B cell (primary cell): ENCODE measurements at regions of chr12 and their contacts with region 1.

Region 1: GRCh38 chr12:111942557-111942956 is 70.4 kb downstream of the TMEM116 start:
- DNase-seq: no peak
- ATAC-seq: no peak
- H3K4me3 ChIP-seq: no peak overlapping the region
- H3K4me3 Mint-ChIP-seq: no peak overlapping the region
- H3K27ac ChIP-seq: no peak overlapping the region
- H3K27ac Mint-ChIP-seq: no peak overlapping the region
- H3K4me1 ChIP-seq: no peaks in the 10 kb centered on the region
- H3K4me1 Mint-ChIP-seq: no peaks in the 10 kb centered on the region
- H3K27me3 ChIP-seq: no peaks in the 10 kb centered on the region
- H3K27me3 Mint-ChIP-seq: no peaks in the 10 kb centered on the region
- CTCF ChIP-seq: no peak

Region 2: GRCh38 chr12:111975161-111975931 is 32.8 kb after region 1 on chr12:
- CTCF ChIA-PET with region 1: no interaction called
- POLR2A ChIA-PET with region 1: no interaction called
- intact Hi-C with region 1: no loop called
- DNase-seq: no peak
- ATAC-seq: no peak
- H3K4me3 ChIP-seq: no peak overlapping the region
- H3K4me3 Mint-ChIP-seq: no peak overlapping the region
- H3K27ac ChIP-seq: no peak overlapping the region
- H3K27ac Mint-ChIP-seq: no peak overlapping the region
- H3K4me1 ChIP-seq: no peaks in the 10 kb centered on the region
- H3K4me1 Mint-ChIP-seq: no peaks in the 10 kb centered on the region
- H3K27me3 ChIP-seq: no peaks in the 10 kb centered on the region
- H3K27me3 Mint-ChIP-seq: no peaks in the 10 kb centered on the region
- CTCF ChIP-seq: no peak

Region 3: DNA sequence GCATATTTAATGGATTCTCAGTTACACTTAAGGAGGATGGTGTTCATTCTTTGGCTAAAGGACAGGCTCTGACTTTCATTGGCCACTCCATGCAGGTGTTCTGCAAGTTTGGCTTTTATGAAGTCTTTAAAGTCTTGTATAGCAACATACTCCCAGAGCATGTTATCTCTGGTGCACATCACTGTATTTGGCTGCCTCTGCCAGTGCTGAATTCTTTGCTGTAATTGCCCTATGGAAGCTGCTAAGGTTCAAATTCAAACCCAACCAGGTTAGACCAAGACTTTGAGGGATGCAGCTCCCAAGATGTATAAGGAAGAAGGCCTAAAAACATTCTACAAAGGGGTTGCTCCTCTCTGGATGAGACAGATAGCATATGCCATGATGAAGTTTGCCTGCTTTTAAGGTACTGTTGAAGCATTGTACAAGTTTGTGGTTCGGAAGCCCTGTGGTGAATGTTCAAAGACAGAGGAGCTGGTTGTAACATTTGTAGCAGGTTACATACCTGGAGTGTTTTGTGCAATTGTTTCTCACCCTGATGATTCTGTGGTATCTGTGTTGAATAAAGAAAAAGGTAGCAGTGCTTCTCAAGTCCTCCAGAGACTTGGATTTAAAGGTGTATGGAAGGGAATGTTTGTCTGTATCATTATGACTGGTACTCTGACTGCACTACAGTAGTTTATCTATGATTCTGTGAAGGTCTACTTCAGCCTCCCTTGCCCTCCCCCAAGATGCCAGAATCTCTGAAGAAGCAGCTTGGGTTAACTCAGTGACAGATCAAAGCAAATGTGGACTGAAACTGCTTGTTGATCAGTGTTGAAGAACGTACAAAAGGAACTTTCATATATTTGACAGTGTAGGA is 51.0 kb after region 1 on chr12:
- CTCF ChIA-PET with region 1: interaction called, 3 read pairs
- POLR2A ChIA-PET with region 1: no interaction called
- intact Hi-C with region 1: loop called (anchors 5 kb)
- DNase-seq: peak; percentile 16
- ATAC-seq: peak; percentile 10
- H3K4me3 ChIP-seq: peak overlapping the region in 2 of 5 experiments; percentile 7 to 60
- H3K4me3 Mint-ChIP-seq: peak overlapping the region; percentile 91
- H3K27ac ChIP-seq: no peak overlapping the region
- H3K27ac Mint-ChIP-seq: no peak overlapping the region
- H3K4me1 ChIP-seq: peaks cover 42 to 45% of the 10 kb centered on the region in 2 donors
- H3K4me1 Mint-ChIP-seq: peaks cover 42% of the 10 kb centered on the region
- H3K27me3 ChIP-seq: peaks cover 0 to 17% (median 12%) of the 10 kb centered on the region in 4 experiments
- H3K27me3 Mint-ChIP-seq: peaks cover 26% of the 10 kb centered on the region
- CTCF ChIP-seq: no peak

Region 4: GRCh38 chr12:112012775-112013600 is 70.4 kb after region 1 on chr12 and contains the starts of genes ERP29 and TMEM116:
- CTCF ChIA-PET with region 1: interaction called, 26 read pairs
- POLR2A ChIA-PET with region 1: interaction called, 8 read pairs
- intact Hi-C with region 1: loop called (anchors 1 kb)
- DNase-seq: peak; percentile 99
- ATAC-seq: peak; percentile 75
- H3K4me3 ChIP-seq: peak within 1 kb of the TSS; percentile 50 to 97 (median 88)
- H3K4me3 Mint-ChIP-seq: peak within 1 kb of the TSS; percentile 87
- H3K27ac ChIP-seq: peak within 1 kb of the TSS; percentile 92 to 93
- H3K27ac Mint-ChIP-seq: peak within 1 kb of the TSS; percentile 91
- H3K4me1 ChIP-seq: peaks cover 45 to 54% of the 10 kb centered on the region in 2 donors
- H3K4me1 Mint-ChIP-seq: peaks cover 46% of the 10 kb centered on the region
- H3K27me3 ChIP-seq: no peaks in the 10 kb centered on the region
- H3K27me3 Mint-ChIP-seq: no peaks in the 10 kb centered on the region
- CTCF ChIP-seq: peak; percentile 69
- total RNA-seq, gene ERP29: 149 and 152 TPM in 2 replicates
- total RNA-seq, gene TMEM116: 10.4 and 11.7 TPM in 2 replicates

Region 5: GRCh38 chr12:112031472-112031871 is 88.9 kb after region 1 on chr12:
- CTCF ChIA-PET with region 1: interaction called, 4 read pairs
- POLR2A ChIA-PET with region 1: no interaction called
- intact Hi-C with region 1: loop called (anchors 5 kb)
- DNase-seq: no peak
- ATAC-seq: no peak
- H3K4me3 ChIP-seq: no peak overlapping the region
- H3K4me3 Mint-ChIP-seq: no peak overlapping the region
- H3K27ac ChIP-seq: no peak overlapping the region
- H3K27ac Mint-ChIP-seq: no peak overlapping the region
- H3K4me1 ChIP-seq: peaks cover under 1 to 2% of the 10 kb centered on the region in 2 donors
- H3K4me1 Mint-ChIP-seq: peaks cover 12% of the 10 kb centered on the region
- H3K27me3 ChIP-seq: no peaks in the 10 kb centered on the region
- H3K27me3 Mint-ChIP-seq: no peaks in the 10 kb centered on the region
- CTCF ChIP-seq: no peak

Region 6: GRCh38 chr12:112046003-112046402 is 103.4 kb after region 1 on chr12:
- CTCF ChIA-PET with region 1: interaction called, 4 read pairs
- POLR2A ChIA-PET with region 1: interaction called, 3 read pairs
- intact Hi-C with region 1: loop called (anchors 5 kb)
- DNase-seq: no peak
- ATAC-seq: no peak
- H3K4me3 ChIP-seq: no peak overlapping the region
- H3K4me3 Mint-ChIP-seq: no peak overlapping the region
- H3K27ac ChIP-seq: no peak overlapping the region
- H3K27ac Mint-ChIP-seq: no peak overlapping the region
- H3K4me1 ChIP-seq: peaks cover 5 to 6% of the 10 kb centered on the region in 2 donors
- H3K4me1 Mint-ChIP-seq: peaks cover 8% of the 10 kb centered on the region
- H3K27me3 ChIP-seq: no peaks in the 10 kb centered on the region
- H3K27me3 Mint-ChIP-seq: no peaks in the 10 kb centered on the region
- CTCF ChIP-seq: no peak

Region 7: GRCh38 chr12:112151766-112152541 is 209.4 kb after region 1 on chr12:
- CTCF ChIA-PET with region 1: no interaction called
- POLR2A ChIA-PET with region 1: no interaction called
- intact Hi-C with region 1: loop called (anchors 10 kb)
- DNase-seq: no peak
- ATAC-seq: no peak
- H3K4me3 ChIP-seq: no peak overlapping the region
- H3K4me3 Mint-ChIP-seq: no peak overlapping the region
- H3K27ac ChIP-seq: peak overlapping the region in 1 of 2 donors; percentile 49
- H3K27ac Mint-ChIP-seq: peak overlapping the region; percentile 28
- H3K4me1 ChIP-seq: peaks cover 3 to 13% of the 10 kb centered on the region in 2 donors
- H3K4me1 Mint-ChIP-seq: peaks cover 15% of the 10 kb centered on the region
- H3K27me3 ChIP-seq: no peaks in the 10 kb centered on the region
- H3K27me3 Mint-ChIP-seq: no peaks in the 10 kb centered on the region
- CTCF ChIP-seq: no peak

Region 8: GRCh38 chr12:112170376-112170775 is 227.8 kb after region 1 on chr12:
- CTCF ChIA-PET with region 1: interaction called, 5 read pairs
- POLR2A ChIA-PET with region 1: no interaction called
- intact Hi-C with region 1: loop called (anchors 1 kb)
- DNase-seq: peak; percentile 29
- ATAC-seq: peak; percentile 62
- H3K4me3 ChIP-seq: no peak overlapping the region
- H3K4me3 Mint-ChIP-seq: no peak overlapping the region
- H3K27ac ChIP-seq: no peak overlapping the region
- H3K27ac Mint-ChIP-seq: peak overlapping the region; percentile 10
- H3K4me1 ChIP-seq: peaks cover 0 to 5% of the 10 kb centered on the region in 2 donors
- H3K4me1 Mint-ChIP-seq: peaks cover 9% of the 10 kb centered on the region
- H3K27me3 ChIP-seq: no peaks in the 10 kb centered on the region
- H3K27me3 Mint-ChIP-seq: no peaks in the 10 kb centered on the region
- CTCF ChIP-seq: peak; percentile 42

Region 9: DNA sequence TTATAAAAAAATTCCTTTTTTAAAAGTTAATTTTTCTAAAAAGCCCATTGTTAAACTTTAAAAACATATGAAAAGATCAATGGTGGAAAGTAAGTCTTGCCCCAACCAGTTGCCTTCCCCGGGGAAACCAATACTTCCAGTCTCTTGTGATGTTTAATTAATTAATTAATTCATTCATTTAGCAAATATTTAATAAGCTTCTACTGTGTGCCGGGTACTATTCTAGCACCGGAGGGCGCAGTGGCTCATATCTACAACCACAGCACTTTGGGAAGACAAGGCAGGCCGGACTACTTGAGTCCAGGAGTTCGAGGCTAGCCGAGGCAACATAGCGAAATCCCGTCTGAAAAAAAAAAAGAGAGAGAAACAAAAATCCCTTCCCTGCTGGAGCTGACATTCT is 352.2 kb after region 1 on chr12:
- CTCF ChIA-PET with region 1: no interaction called
- POLR2A ChIA-PET with region 1: no interaction called
- intact Hi-C with region 1: no loop called
- DNase-seq: peak; percentile 26
- ATAC-seq: no peak
- H3K4me3 ChIP-seq: no peak overlapping the region
- H3K4me3 Mint-ChIP-seq: no peak overlapping the region
- H3K27ac ChIP-seq: no peak overlapping the region
- H3K27ac Mint-ChIP-seq: no peak overlapping the region
- H3K4me1 ChIP-seq: no peaks in the 10 kb centered on the region
- H3K4me1 Mint-ChIP-seq: no peaks in the 10 kb centered on the region
- H3K27me3 ChIP-seq: no peaks in the 10 kb centered on the region
- H3K27me3 Mint-ChIP-seq: no peaks in the 10 kb centered on the region
- CTCF ChIP-seq: no peak